ENCODE measurements at regions of chr19 and their contacts with region 1.

Region 1: GRCh38 chr19:3125900-3126524 is 9.8 kb upstream of the GNA15 start:
- DNase-seq: peak; percentile 53
- H3K4me3 ChIP-seq: no peak overlapping the region
- H3K27ac ChIP-seq: no peak overlapping the region
- H3K4me1 ChIP-seq: no peaks in the 10 kb centered on the region
- H3K27me3 ChIP-seq: no peaks in the 10 kb centered on the region
- CTCF ChIP-seq: peak; percentile 75 to 90
- POLR2A ChIP-seq: no peak

Region 2: GRCh38 chr19:2896694-2897093 is 229.3 kb before region 1 on chr19:
- CTCF ChIA-PET with region 1: no interaction called
- POLR2A ChIA-PET with region 1: no interaction called
- dilution Hi-C with region 1: no loop called
- intact Hi-C with region 1: no loop called
- DNase-seq: no peak
- H3K4me3 ChIP-seq: no peak overlapping the region
- H3K27ac ChIP-seq: no peak overlapping the region
- H3K4me1 ChIP-seq: no peaks in the 10 kb centered on the region
- H3K27me3 ChIP-seq: no peaks in the 10 kb centered on the region
- CTCF ChIP-seq: no peak
- POLR2A ChIP-seq: no peak

Region 3: DNA sequence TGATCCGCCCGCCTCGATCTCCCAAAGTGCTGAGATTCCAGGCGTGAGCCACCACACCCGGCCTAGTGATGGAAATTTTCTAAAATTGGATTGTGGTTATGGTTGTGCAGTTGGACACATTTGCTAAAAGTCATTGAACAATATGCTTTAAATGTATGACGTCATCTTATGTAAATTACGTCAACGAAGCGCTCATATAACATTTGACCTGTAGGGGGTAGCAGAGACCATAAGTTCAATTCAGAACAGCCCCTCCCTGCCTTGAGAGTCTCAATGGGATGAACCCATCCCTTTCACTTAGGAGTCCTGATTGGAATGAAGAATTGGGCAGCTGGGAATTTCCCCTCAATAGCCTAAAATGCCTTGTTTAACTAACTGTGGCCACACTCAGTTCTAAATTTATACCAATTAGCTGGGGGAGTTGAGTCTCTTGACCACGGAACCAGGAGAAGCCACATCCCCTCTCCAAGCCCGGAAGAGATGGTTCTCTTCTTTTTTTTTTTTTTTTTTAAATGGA is 163.9 kb before region 1 on chr19:
- CTCF ChIA-PET with region 1: interaction called, 11 read pairs
- POLR2A ChIA-PET with region 1: no interaction called
- dilution Hi-C with region 1: no loop called
- intact Hi-C with region 1: loop called (anchors 1 kb)
- DNase-seq: peak; percentile 89
- H3K4me3 ChIP-seq: no peak overlapping the region
- H3K27ac ChIP-seq: no peak overlapping the region
- H3K4me1 ChIP-seq: no peaks in the 10 kb centered on the region
- H3K27me3 ChIP-seq: no peaks in the 10 kb centered on the region
- CTCF ChIP-seq: peak; percentile 51 to 52
- POLR2A ChIP-seq: no peak

Region 4: DNA sequence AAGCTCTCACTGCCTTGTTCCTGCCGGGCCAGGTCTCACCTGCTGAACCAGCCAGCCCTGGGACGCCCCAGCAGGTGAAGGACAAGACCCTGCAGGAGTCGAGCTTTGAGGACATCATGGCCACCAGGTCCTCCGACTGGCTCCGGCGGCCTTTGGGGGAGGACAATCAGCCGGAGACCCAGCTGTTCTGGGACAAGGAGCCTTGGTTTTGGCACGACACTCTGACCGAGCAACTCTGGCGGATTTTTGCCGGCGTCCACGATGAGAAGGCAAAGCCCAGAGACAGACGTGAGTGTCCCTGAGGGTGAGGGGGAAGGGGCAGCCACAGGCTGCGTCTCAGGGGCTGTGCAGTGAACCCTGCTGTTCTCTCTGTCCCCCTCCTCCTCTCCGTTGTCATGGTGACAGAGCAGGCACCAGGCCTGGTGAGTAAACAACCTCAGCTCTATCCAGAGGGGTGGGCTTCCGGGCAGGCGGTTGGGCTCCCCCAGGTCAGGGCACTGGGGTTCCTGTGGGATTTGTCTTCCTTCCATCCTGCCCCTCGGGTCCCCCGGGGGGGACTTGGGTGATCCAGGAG is 139.0 kb before region 1 on chr19:
- CTCF ChIA-PET with region 1: no interaction called
- POLR2A ChIA-PET with region 1: no interaction called
- dilution Hi-C with region 1: no loop called
- intact Hi-C with region 1: no loop called
- DNase-seq: peak; percentile 55
- H3K4me3 ChIP-seq: no peak overlapping the region
- H3K27ac ChIP-seq: no peak overlapping the region
- H3K4me1 ChIP-seq: peaks cover 19% of the 10 kb centered on the region
- H3K27me3 ChIP-seq: no peaks in the 10 kb centered on the region
- CTCF ChIP-seq: no peak
- POLR2A ChIP-seq: no peak

Region 5: GRCh38 chr19:3005345-3005744 is 120.7 kb before region 1 on chr19:
- CTCF ChIA-PET with region 1: no interaction called
- POLR2A ChIA-PET with region 1: no interaction called
- dilution Hi-C with region 1: no loop called
- intact Hi-C with region 1: no loop called
- DNase-seq: no peak
- H3K4me3 ChIP-seq: no peak overlapping the region
- H3K27ac ChIP-seq: no peak overlapping the region
- H3K4me1 ChIP-seq: no peaks in the 10 kb centered on the region
- H3K27me3 ChIP-seq: no peaks in the 10 kb centered on the region
- CTCF ChIP-seq: no peak
- POLR2A ChIP-seq: no peak

Region 6: DNA sequence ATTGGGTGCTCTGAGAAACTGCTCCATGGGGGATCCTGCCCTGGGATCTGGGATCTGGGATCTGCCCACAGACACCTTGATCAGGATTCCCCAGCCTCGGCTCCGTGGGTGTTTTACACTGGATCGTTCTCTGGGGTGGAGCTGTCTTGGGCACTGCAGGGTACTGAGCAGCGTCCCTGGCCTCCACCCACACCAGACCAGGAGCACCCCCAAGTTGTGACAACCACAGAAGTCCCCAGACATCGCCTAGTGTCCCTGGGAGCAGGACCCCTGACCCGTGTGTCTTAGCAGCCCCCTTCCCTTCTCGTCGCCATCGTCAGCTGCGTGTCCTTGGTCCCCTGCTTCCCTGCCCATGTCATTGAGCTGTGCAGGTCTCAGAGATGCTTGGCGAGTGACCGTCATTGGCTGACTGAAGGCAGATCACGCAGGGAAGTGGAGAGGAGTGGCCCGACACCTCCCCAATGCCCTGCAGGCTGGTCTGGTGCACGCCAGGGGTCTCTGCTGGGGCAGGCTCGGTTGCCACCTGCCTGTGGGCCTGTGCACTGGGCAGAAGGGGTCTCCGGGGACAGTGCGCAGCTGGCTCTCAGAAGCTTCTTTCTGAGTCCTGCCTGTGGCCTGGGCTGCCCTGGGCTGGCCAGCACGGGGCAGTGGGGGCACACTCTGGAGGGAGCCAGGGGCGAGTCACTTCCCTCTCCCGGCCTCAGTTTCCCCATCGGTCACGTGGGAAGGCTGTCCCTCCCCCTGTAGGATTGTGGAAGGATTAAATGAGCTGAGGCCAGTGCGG is 25.7 kb before region 1 on chr19:
- CTCF ChIA-PET with region 1: interaction called, 21 read pairs
- POLR2A ChIA-PET with region 1: no interaction called
- dilution Hi-C with region 1: no loop called
- intact Hi-C with region 1: no loop called
- DNase-seq: no peak
- H3K4me3 ChIP-seq: no peak overlapping the region
- H3K27ac ChIP-seq: no peak overlapping the region
- H3K4me1 ChIP-seq: peaks cover 34% of the 10 kb centered on the region
- H3K27me3 ChIP-seq: no peaks in the 10 kb centered on the region
- CTCF ChIP-seq: no peak
- POLR2A ChIP-seq: no peak

Region 7: GRCh38 chr19:3146677-3147100 is 20.7 kb after region 1 on chr19:
- CTCF ChIA-PET with region 1: interaction called, 122 read pairs
- POLR2A ChIA-PET with region 1: interaction called, 5 read pairs
- dilution Hi-C with region 1: no loop called
- intact Hi-C with region 1: loop called (anchors 1 kb)
- DNase-seq: no peak
- H3K4me3 ChIP-seq: no peak overlapping the region
- H3K27ac ChIP-seq: no peak overlapping the region
- H3K4me1 ChIP-seq: peaks cover 13% of the 10 kb centered on the region
- H3K27me3 ChIP-seq: no peaks in the 10 kb centered on the region
- CTCF ChIP-seq: peak; percentile 83 to 94
- POLR2A ChIP-seq: no peak

Region 8: GRCh38 chr19:3163230-3163886 is 37.3 kb after region 1 on chr19:
- CTCF ChIA-PET with region 1: interaction called, 177 read pairs
- POLR2A ChIA-PET with region 1: no interaction called
- dilution Hi-C with region 1: no loop called
- intact Hi-C with region 1: loop called (anchors 1 kb)
- DNase-seq: peak; percentile 54
- H3K4me3 ChIP-seq: no peak overlapping the region
- H3K27ac ChIP-seq: no peak overlapping the region
- H3K4me1 ChIP-seq: peaks cover 6% of the 10 kb centered on the region
- H3K27me3 ChIP-seq: no peaks in the 10 kb centered on the region
- CTCF ChIP-seq: peak; percentile 79 to 97
- POLR2A ChIP-seq: no peak

Region 9: DNA sequence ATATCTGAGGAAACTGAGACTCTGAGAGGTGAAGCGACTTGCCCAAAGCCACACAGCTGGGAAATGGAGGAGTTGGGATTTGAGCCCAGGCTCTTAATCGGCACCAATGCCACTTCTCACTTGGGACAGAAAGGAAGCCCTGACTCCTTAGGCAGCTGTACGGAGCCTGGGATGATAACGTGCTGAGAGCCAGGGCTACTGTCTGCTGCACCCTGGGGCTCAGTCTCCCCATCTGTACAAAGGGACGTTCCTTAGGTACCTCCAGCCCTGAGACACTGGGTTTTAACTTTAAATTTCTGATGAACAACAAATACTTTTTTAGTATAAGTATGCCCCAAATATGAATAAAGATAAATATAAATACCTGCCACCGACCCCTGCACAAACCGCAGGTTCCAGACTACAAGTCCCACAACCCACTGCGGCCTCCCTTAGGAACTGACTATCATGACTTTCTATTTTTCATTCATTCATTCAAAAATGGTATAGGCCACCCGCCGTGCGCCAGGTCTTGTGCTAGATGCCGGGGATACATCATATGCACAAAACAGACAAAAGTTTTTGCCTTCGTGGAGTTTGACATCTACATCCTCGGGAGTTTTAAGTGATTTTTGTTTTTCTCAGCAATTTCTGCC is 59.0 kb after region 1 on chr19:
- CTCF ChIA-PET with region 1: interaction called, 12 read pairs
- POLR2A ChIA-PET with region 1: no interaction called
- dilution Hi-C with region 1: no loop called
- intact Hi-C with region 1: no loop called
- DNase-seq: no peak
- H3K4me3 ChIP-seq: peak overlapping the region; percentile 17 to 62 (median 39)
- H3K27ac ChIP-seq: peak overlapping the region; percentile 70
- H3K4me1 ChIP-seq: peaks cover 12% of the 10 kb centered on the region
- H3K27me3 ChIP-seq: no peaks in the 10 kb centered on the region
- CTCF ChIP-seq: no peak
- POLR2A ChIP-seq: no peak

Measured in endothelial cell of umbilical vein (primary cell).